PC-3 (cell line): ENCODE measurements at regions of chr19 and their contacts with region 1.

Region 1: DNA sequence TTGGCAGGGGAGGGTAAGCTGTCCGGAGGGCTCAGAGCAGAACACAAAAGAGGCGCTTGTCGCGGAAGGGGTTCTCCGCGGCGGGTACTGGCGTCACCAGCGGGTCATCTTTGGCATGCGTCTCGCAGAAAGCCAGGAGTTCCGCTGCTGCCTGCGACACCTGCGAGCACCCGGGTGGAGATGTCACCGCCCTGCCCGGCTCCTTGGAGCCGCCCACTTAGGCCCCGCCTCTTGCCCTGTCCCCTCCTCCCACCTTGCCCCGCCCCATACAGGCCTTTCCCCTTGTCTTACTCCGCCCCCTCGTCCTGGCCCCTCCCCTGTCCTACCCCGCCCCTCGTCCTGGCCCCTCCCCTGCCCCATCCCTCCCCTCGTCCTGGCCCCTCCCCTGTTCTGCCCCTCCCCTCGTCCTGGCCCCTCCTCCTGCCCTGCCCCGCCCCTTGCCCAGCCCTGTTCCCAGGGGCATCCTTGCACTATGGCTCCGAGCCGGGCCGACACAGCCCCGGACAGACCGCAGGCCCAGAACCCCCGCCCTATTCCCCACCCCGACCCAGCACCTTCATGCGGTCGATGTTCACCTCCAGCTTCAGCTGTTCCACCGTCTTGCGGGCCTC is 1.9 kb downstream of the GNG8 start:
- DNase-seq: peak; percentile 84
- ATAC-seq: peak; percentile 68
- H3K4me3 ChIP-seq: peak overlapping the region; percentile 63
- H3K27ac ChIP-seq: no peak overlapping the region
- H3K4me1 ChIP-seq: 0 out of 2 replicates have a peak, but pooled peaks cover 6% of the 10 kb centered on the region
- H3K27me3 ChIP-seq: no peaks in the 10 kb centered on the region
- CTCF ChIP-seq: no peak

Region 2: DNA sequence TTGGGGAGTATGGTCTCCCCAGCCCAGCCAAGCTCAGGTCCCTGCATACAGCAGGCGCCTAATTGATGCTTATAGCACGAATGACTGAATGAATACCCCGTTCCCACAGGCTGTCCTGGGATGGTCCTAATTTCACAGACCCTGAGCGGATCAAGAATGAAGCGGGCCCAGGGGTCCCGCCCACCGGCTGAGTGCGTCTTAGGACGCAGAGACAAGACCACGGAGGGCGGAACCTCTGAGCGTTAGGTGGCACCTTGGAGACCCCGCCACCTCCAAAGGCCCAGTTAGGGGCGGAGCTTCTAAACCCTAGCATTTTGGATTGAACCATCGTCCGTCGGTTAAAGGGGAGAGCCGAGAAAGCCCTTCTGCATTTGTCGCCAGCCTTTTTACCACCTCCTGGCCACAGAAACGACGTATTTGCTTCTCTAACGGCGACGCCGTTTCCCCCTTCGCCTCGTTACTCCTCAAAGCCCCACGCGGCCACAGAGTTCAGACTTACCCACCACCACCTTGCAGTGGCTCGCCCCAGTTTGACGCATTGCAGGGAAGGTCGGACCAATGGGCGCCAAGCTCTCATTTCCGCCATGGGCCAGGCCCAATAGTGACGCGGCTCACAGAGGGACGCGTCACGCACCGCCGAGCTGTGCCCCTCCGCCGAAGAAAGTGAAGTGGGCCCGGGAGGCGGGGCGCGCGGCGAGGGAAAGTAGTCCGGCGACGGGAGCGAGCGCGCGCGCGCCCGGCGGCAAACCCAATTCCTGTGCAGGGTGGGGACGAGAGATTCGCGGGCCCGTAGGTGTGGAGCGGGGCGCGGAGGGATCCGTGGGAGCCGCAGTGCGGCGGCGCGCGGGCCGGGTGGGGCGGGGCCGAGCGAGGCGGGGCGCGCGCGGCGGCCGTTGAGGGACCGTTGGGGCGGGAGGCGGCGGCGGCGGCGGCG is 33.5 kb before region 1 on chr19:
- CTCF ChIA-PET with region 1: interaction called, 14 read pairs
- POLR2A ChIA-PET with region 1: no interaction called
- intact Hi-C with region 1: no loop called
- DNase-seq: peak; percentile 93
- ATAC-seq: peak; percentile 84
- H3K4me3 ChIP-seq: peak overlapping the region; percentile 100
- H3K27ac ChIP-seq: peak overlapping the region; percentile 94
- H3K4me1 ChIP-seq: peaks cover 13% of the 10 kb centered on the region
- H3K27me3 ChIP-seq: no peaks in the 10 kb centered on the region
- CTCF ChIP-seq: no peak

Region 3: GRCh38 chr19:46661020-46661731 is 27.0 kb after region 1 on chr19 and contains the start of gene DACT3:
- CTCF ChIA-PET with region 1: interaction called, 10 read pairs
- POLR2A ChIA-PET with region 1: no interaction called
- intact Hi-C with region 1: no loop called
- DNase-seq: peak; percentile 97
- ATAC-seq: peak; percentile 95
- H3K4me3 ChIP-seq: peak within 1 kb of the TSS; percentile 66
- H3K27ac ChIP-seq: no peak within 1 kb of the TSS
- H3K4me1 ChIP-seq: peaks cover 9% of the 10 kb centered on the region
- H3K27me3 ChIP-seq: no peaks in the 10 kb centered on the region
- CTCF ChIP-seq: no peak
- total RNA-seq, gene DACT3: 1.9 and 3.1 TPM in 2 replicates

Region 4: DNA sequence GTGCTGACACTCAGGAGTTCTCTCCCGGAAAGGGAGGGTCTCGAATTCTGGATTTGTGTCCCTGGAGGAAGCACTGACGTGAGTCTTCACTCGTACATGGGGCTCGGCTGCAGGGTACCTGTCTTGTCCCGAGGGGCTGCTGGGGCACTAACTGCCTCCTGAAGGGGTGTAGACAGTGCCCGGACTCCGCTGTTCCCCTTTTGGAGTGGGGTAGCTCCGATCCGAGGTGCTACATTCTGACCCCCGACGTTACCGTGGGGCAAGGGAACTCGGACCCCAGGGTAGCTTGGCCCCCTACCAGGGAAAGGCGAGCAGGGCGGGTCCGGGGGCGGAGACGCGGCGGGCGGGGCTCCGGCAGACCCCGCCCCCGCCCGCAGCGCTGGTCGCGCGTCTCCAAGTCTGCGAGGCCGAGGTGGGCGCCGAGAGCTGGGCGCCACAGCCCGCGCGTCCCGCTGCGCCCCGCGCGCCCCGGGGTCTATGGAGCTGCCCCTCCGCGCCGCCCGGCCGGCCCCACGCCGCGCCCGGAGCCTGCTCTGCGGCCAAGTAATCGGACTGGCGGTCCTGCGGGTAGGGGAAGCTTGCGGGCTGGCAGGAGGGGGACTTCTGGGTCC is 385.4 kb after region 1 on chr19 and contains the start of gene NPAS1:
- CTCF ChIA-PET with region 1: no interaction called
- POLR2A ChIA-PET with region 1: no interaction called
- intact Hi-C with region 1: no loop called
- DNase-seq: no peak
- ATAC-seq: no peak
- H3K4me3 ChIP-seq: peak within 1 kb of the TSS; percentile 27; the same call in 1 of the 2 replicates
- H3K27ac ChIP-seq: no peak within 1 kb of the TSS
- H3K4me1 ChIP-seq: peaks cover 9% of the 10 kb centered on the region; the same call in 1 of the 2 replicates
- H3K27me3 ChIP-seq: peaks cover 35% of the 10 kb centered on the region
- CTCF ChIP-seq: no peak
- total RNA-seq, gene NPAS1: 1.1 and 1.6 TPM in 2 replicates

Region 5: DNA sequence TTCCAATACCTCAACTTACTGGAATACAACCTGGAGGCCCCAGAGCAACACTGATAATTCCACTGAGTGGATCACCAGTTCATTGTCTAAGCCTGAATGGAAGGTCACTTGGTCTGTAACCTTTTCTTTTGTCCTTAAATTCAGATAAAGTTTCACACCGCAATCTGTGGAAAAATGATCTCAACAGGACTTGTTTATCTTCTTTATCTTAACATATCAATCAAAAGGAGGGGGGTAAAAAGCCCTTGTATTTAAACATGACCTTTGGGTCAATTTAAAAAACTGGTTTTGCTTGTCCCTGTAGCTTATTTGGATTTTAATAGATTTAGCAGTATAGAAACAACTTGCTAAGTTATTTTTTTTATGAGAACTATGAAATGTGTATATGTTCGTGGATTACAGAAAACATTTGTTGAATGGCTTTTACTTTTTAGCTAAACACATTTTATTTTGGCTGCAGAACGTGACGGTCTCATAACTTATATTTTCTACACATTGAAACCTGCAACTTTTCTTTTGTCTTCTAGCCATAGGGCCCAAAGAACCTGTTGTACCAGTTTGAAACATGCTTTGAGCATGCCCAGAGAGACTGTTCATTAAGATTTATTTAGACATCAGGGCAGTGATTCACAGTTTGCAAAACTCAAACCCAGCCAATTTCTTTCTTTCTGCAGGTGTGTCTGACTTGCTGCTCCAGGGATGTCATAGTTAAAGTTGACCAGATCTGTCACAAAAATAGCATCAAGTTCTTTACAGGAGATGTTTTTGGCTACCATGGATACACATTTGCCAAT is 518.3 kb after region 1 on chr19:
- CTCF ChIA-PET with region 1: interaction called, 10 read pairs
- POLR2A ChIA-PET with region 1: no interaction called
- intact Hi-C with region 1: no loop called
- DNase-seq: peak; percentile 86
- ATAC-seq: peak; percentile 63
- H3K4me3 ChIP-seq: peak overlapping the region; percentile 35; the same call in 1 of the 2 replicates
- H3K27ac ChIP-seq: peak overlapping the region; percentile 75
- H3K4me1 ChIP-seq: peaks cover 33% of the 10 kb centered on the region
- H3K27me3 ChIP-seq: no peaks in the 10 kb centered on the region
- CTCF ChIP-seq: no peak